PC-9 (cell line): ENCODE measurements at regions of chr2 and their contacts with region 1.

Region 1: GRCh38 chr2:222976521-222977076 is 75.4 kb upstream of the KCNE4 start:
- DNase-seq: peak in 1 of 2 experiments; percentile 83
- H3K4me3 ChIP-seq: no peak overlapping the region
- H3K27ac ChIP-seq: no peak overlapping the region
- H3K4me1 ChIP-seq: peaks cover 42% of the 10 kb centered on the region
- H3K27me3 ChIP-seq: no peaks in the 10 kb centered on the region
- CTCF ChIP-seq: no peak

Region 2: DNA sequence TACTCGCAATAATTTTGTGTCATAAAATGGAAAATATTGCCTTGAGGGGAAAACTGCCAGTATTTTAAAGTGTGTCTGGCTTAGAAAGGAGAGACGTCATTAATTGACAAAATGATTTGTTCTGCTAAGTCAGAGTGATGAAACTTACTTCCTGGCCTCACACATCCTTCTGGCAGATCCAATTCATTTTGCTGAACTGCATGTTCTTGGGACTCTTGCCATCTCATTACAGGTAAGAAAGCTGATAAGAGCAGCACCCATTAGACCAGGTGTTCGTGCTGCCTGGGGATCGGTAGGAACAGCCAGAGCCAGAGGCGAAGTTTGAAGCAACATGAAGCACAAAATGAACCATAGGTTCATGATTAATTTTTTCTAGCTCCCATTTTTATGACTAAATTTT is 113.4 kb after region 1 on chr2:
- CTCF ChIA-PET with region 1: no interaction called
- POLR2A ChIA-PET with region 1: no interaction called
- intact Hi-C with region 1: no loop called
- DNase-seq: no peak
- H3K4me3 ChIP-seq: no peak overlapping the region
- H3K27ac ChIP-seq: no peak overlapping the region
- H3K4me1 ChIP-seq: no peaks in the 10 kb centered on the region
- H3K27me3 ChIP-seq: no peaks in the 10 kb centered on the region
- CTCF ChIP-seq: no peak

Region 3: GRCh38 chr2:223101340-223102039 is 124.9 kb after region 1 on chr2:
- CTCF ChIA-PET with region 1: interaction called, 4 read pairs
- POLR2A ChIA-PET with region 1: interaction called, 6 read pairs
- intact Hi-C with region 1: loop called (anchors 5 kb)
- DNase-seq: peak in 1 of 2 experiments; percentile 51
- H3K4me3 ChIP-seq: no peak overlapping the region
- H3K27ac ChIP-seq: no peak overlapping the region
- H3K4me1 ChIP-seq: peaks cover 5% of the 10 kb centered on the region; the same call in 1 of the 2 replicates
- H3K27me3 ChIP-seq: no peaks in the 10 kb centered on the region
- CTCF ChIP-seq: peak; percentile 86

Region 4: GRCh38 chr2:223459328-223459939 is 482.8 kb after region 1 on chr2:
- CTCF ChIA-PET with region 1: interaction called, 3 read pairs
- POLR2A ChIA-PET with region 1: no interaction called
- intact Hi-C with region 1: loop called (anchors 10 kb)
- DNase-seq: no peak
- H3K4me3 ChIP-seq: no peak overlapping the region
- H3K27ac ChIP-seq: no peak overlapping the region
- H3K4me1 ChIP-seq: peaks cover 21% of the 10 kb centered on the region
- H3K27me3 ChIP-seq: no peaks in the 10 kb centered on the region
- CTCF ChIP-seq: peak; percentile 75

Region 5: DNA sequence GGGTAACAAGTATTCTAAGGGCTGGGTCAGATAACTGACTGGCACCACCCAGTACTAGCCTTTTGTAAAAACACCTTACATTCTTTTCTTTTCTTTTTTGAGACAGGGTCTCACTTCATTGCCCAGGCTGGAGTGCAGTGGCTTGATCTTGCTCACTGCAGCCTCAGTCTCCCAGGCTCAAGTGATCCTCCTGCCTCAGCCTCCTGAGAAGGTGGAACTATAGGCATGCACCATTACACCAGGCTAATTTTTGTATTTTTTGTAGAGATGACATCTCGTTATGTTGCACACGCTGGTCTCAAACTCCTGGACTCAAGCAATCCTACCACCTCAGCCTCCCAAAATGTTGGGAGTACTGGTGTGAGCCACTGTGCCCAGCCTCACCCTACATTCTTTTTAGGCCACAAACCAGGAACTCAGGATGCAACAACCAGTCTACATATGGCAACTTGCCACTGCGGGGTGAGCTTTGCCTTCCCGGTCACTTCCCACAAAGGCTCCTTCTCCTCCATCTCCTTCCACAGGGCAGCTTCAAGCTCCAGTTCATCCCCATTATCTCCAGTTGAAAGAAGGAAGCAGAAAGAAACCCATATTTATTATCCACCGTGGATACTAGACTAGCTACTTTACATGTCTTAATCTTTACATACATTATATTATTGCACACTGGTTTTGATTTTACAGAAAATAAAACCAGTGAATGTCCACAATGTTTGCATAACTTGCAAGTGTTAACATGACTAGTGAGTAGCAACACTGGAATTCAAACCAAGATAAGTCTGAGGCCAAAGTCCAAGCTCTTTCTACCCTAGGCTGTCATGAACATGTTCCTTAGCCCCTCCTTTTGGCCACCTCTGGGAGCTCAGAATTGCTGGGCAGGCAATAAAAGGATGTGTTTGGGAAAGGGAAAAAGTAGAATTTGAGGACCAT is 884.5 kb after region 1 on chr2:
- CTCF ChIA-PET with region 1: no interaction called
- POLR2A ChIA-PET with region 1: no interaction called
- intact Hi-C with region 1: loop called (anchors 2 kb)
- DNase-seq: peak; percentile 92 to 98
- H3K4me3 ChIP-seq: no peak overlapping the region; the same call in 1 of the 2 replicates
- H3K27ac ChIP-seq: peak overlapping the region; percentile 85
- H3K4me1 ChIP-seq: peaks cover 51% of the 10 kb centered on the region
- H3K27me3 ChIP-seq: no peaks in the 10 kb centered on the region
- CTCF ChIP-seq: peak; percentile 67

Region 6: DNA sequence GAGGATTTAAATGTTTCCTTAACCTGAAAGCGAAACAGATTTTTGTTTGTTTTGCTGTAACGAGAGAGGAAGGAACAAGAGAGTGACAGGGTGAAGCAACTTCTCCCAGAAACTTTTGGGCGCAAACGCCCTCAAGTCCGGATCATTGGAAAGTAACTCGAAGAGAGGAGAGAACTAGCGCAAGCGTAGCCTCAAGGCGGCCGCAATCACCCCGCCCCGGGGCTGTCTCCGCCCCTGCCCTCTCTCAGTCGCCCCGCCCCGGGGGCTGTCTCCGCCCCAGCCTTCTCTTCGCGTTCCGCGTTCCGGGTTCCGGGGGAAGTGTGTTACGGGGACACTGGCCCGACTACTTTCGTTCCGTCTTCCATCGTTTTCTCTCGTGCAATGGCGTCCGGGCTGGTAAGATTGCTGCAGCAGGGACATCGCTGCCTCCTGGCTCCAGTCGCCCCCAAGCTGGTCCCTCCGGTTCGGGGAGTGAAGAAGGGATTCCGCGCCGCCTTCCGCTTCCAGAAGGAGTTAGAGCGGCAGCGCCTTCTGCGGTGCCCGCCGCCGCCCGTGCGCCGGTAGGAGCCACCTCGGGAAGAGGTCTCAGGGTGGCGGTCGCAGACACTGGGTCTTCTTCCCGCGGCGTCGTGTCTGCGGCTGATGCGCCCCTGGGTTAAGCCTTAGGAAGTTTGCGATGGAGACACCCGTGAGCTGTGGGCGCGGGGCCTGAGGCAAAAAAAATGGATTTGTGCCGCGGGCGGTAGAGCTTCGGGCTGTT is 980.7 kb after region 1 on chr2 and contains the start of gene MRPL44:
- CTCF ChIA-PET with region 1: no interaction called
- POLR2A ChIA-PET with region 1: no interaction called
- intact Hi-C with region 1: loop called (anchors 5 kb)
- DNase-seq: peak; percentile 92 to 100
- H3K4me3 ChIP-seq: peak within 1 kb of the TSS; percentile 81
- H3K27ac ChIP-seq: peak within 1 kb of the TSS; percentile 73
- H3K4me1 ChIP-seq: peaks cover 37% of the 10 kb centered on the region
- H3K27me3 ChIP-seq: no peaks in the 10 kb centered on the region
- CTCF ChIP-seq: 0 out of 2 replicates have a peak, but pooled peaks have one; percentile 7
- total RNA-seq, gene MRPL44: 66.4 and 76.6 TPM in 2 replicates